ENCODE measurements at regions of chr3 and their contacts with region 1.

Region 1: DNA sequence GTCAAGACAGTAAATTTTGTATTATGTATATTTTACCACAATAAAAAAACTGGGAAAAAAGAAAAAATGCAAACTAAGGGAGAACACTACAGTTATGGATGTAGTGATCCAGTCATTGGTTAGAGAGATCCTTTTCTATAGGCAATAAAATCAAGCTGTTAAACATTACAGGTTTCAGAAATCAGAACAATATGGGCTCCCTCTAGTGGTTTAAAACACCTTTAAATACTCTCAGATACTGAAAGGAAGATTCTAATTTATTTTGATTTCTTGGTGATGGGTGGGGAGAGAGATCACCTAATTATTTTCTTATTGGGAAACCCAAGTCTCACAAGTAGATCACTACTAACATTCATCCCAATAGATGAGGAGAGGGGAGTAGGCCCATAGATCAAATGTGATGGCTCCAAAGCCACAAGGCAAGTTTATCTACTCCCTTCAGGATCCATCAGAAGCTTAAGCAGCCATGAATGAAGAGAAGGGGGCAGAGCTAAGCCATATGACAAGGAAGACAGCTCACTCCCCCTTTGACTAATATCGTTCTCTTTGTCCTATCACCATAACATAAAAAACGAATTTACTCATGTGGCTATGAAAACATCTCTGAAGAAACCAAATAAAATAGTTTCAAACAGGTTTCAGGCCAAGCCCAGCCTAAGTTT is 118.6 kb downstream of the ANO10 start:
- DNase-seq: peak in 4 of 5 donors; percentile 54 to 61 (median 60)
- H3K4me3 ChIP-seq: no peak overlapping the region
- H3K4me3 Mint-ChIP-seq: no peak overlapping the region
- H3K27ac ChIP-seq: no peak overlapping the region
- H3K27ac Mint-ChIP-seq: peak overlapping the region in 5 of 7 donors; percentile 24 to 88 (median 63)
- H3K4me1 ChIP-seq: peaks cover 39% of the 10 kb centered on the region
- H3K4me1 Mint-ChIP-seq: peaks cover 32 to 52% (median 41%) of the 10 kb centered on the region in 4 donors
- H3K27me3 ChIP-seq: no peaks in the 10 kb centered on the region
- H3K27me3 Mint-ChIP-seq: no peaks in the 10 kb centered on the region

Region 2: GRCh38 chr3:43215663-43216275 is 287.4 kb before region 1 on chr3:
- CTCF ChIA-PET with region 1: interaction called, 10 read pairs
- POLR2A ChIA-PET with region 1: no interaction called
- intact Hi-C with region 1: no loop called
- DNase-seq: no peak
- H3K4me3 ChIP-seq: no peak overlapping the region
- H3K4me3 Mint-ChIP-seq: peak overlapping the region in 1 of 8 donors; percentile 43
- H3K27ac ChIP-seq: no peak overlapping the region
- H3K27ac Mint-ChIP-seq: peak overlapping the region in 5 of 7 donors; percentile 8 to 47 (median 32)
- H3K4me1 ChIP-seq: peaks cover 13% of the 10 kb centered on the region
- H3K4me1 Mint-ChIP-seq: peaks cover 22 to 43% (median 34%) of the 10 kb centered on the region in 4 donors
- H3K27me3 ChIP-seq: no peaks in the 10 kb centered on the region
- H3K27me3 Mint-ChIP-seq: peaks cover 0 to 1% of the 10 kb centered on the region in 2 donors

Region 3: GRCh38 chr3:43378066-43378935 is 124.9 kb before region 1 on chr3:
- CTCF ChIA-PET with region 1: interaction called, 27 read pairs
- POLR2A ChIA-PET with region 1: interaction called, 15 read pairs
- intact Hi-C with region 1: loop called (anchors 1 kb)
- DNase-seq: peak; percentile 71 to 76 (median 73)
- H3K4me3 ChIP-seq: no peak overlapping the region
- H3K4me3 Mint-ChIP-seq: peak overlapping the region in 2 of 8 donors; percentile 11 to 14
- H3K27ac ChIP-seq: no peak overlapping the region
- H3K27ac Mint-ChIP-seq: peak overlapping the region in 6 of 7 donors; percentile 38 to 84 (median 69)
- H3K4me1 ChIP-seq: peaks cover 9% of the 10 kb centered on the region
- H3K4me1 Mint-ChIP-seq: peaks cover 9 to 26% (median 17%) of the 10 kb centered on the region in 4 donors
- H3K27me3 ChIP-seq: no peaks in the 10 kb centered on the region
- H3K27me3 Mint-ChIP-seq: no peaks in the 10 kb centered on the region

Region 4: DNA sequence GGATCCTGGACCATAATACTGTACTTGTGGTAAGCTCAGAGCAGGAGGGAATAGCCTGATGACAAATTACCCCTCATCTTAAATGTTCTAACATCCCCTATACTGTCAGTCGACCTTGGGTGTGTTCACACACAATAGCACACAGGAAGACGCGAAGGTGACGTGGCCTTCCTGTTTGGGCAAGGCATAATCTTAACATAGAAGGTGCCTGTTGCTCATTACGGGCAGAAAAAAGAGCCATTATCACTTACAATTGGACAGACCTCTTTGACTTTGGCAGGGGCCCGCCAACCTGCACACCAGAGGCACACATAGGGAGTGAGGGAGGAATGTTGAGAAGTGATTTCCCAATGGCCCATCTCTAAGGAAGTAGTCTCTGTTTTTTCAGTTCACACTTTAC is 25.6 kb before region 1 on chr3:
- CTCF ChIA-PET with region 1: interaction called, 30 read pairs
- POLR2A ChIA-PET with region 1: interaction called, 17 read pairs
- intact Hi-C with region 1: loop called (anchors 1 kb)
- DNase-seq: peak; percentile 77 to 88 (median 82)
- H3K4me3 ChIP-seq: peak overlapping the region in 1 of 2 donors; percentile 27
- H3K4me3 Mint-ChIP-seq: peak overlapping the region; percentile 17 to 78 (median 66)
- H3K27ac ChIP-seq: peak overlapping the region; percentile 74
- H3K27ac Mint-ChIP-seq: peak overlapping the region; percentile 83 to 99 (median 99)
- H3K4me1 ChIP-seq: peaks cover 39% of the 10 kb centered on the region
- H3K4me1 Mint-ChIP-seq: peaks cover 37 to 61% (median 49%) of the 10 kb centered on the region in 4 donors
- H3K27me3 ChIP-seq: no peaks in the 10 kb centered on the region
- H3K27me3 Mint-ChIP-seq: no peaks in the 10 kb centered on the region

Measured in CD4-positive, alpha-beta memory T cell (primary cell).